Activated CD8-positive, alpha-beta T cell treated with anti-CD3 and anti-CD28 coated beads for 36 hours (primary cell): ENCODE measurements at regions of chr15 and their contacts with region 1.

Region 1: GRCh38 chr15:73972984-73973682 is 19.0 kb downstream of the STOML1 start:
- DNase-seq: peak; percentile 91
- ATAC-seq: peak; percentile 85
- H3K4me3 Mint-ChIP-seq: no peak overlapping the region
- H3K27ac Mint-ChIP-seq: no peak overlapping the region
- H3K4me1 Mint-ChIP-seq: peaks cover 23% of the 10 kb centered on the region
- H3K27me3 Mint-ChIP-seq: peaks cover 15% of the 10 kb centered on the region
- CTCF ChIP-seq: peak; percentile 72

Region 2: DNA sequence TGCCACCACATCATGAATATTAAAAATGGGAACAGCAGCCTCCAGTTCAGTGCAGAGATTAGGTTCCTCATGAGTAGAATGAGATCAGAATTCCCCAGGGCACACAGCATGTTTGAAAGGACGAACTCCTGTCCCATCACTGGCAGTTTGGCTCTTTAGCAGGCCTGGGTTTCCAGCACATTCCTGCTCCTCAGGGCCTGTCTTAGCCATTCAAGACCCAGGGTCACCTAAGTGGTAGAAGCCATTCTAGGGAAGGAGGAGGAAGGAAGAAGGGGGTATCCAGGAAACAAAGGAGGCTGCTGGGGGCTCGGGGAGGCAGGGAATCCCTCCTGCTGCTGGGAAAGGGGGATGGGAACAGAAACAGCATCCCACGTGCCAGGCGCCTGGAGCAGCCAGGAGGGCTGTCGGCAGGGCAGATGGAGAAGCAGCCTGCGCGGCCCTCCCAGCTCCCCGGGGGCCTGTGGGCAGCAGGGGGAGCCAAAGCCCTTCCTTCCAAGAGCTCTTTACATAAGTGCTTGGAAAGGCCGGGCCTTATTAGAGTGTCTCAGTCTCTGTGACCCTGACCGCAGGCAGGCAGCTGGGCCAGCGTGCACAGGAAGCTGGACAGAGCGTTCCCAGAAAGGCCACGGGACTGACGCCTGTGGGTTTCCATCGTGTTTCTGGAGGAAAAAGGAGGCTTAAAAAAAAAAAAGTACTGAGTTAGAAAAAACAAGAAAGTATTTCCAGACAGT is 22.1 kb before region 1 on chr15:
- CTCF ChIA-PET with region 1: interaction called, 12 read pairs
- POLR2A ChIA-PET with region 1: no interaction called
- intact Hi-C with region 1: no loop called
- DNase-seq: peak; percentile 88
- ATAC-seq: peak; percentile 98
- H3K4me3 Mint-ChIP-seq: no peak overlapping the region
- H3K27ac Mint-ChIP-seq: peak overlapping the region; percentile 80
- H3K4me1 Mint-ChIP-seq: peaks cover 4% of the 10 kb centered on the region
- H3K27me3 Mint-ChIP-seq: no peaks in the 10 kb centered on the region
- CTCF ChIP-seq: peak; percentile 73

Region 3: DNA sequence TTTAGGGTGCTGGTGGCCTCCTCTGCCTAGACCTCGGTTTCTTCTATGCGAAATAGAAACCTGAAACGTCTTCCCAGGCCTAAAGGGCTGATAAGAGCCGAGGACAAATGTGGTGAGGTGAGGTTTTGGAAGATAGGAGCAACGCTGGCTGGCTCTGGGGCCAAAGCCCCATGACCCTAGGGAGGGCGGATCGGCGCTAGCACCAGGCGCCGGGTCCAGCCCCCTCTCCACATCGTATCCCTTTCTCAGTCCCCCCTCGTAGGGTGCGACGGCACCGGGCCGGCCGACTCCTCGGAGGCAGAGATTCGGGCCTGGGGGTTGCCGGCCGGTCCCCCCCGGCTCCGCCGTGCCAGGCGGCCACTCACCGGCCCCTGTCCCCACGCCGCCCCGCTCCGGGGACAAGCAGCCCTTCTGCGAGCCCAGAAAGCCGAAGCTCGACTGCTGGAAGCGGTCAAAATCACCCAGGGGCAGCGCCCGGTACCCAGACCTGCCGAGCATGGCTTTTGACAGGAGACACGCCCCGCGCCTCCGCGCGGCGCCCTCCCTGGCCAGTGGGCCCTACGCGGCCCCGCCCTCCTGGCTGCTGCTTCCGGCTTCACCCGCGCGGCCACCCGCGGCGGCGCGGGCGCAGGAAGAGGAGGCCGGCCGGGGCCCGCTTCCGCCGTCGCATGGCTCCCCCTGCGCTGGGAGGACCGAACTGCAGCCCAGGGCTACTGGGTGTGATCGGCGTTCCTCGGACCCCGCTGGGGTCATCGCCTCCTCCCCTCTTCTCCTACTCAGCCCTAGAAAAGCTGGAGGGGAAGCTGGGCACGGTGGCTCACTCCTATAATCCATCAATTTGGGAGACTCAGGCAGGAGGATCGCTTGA is 18.8 kb after region 1 on chr15 and contains the start of gene STOML1:
- CTCF ChIA-PET with region 1: interaction called, 106 read pairs
- POLR2A ChIA-PET with region 1: interaction called, 7 read pairs
- intact Hi-C with region 1: no loop called
- DNase-seq: peak; percentile 94
- ATAC-seq: peak; percentile 77
- H3K4me3 Mint-ChIP-seq: peak within 1 kb of the TSS; percentile 78
- H3K27ac Mint-ChIP-seq: peak within 1 kb of the TSS; percentile 83
- H3K4me1 Mint-ChIP-seq: peaks cover 33% of the 10 kb centered on the region
- H3K27me3 Mint-ChIP-seq: no peaks in the 10 kb centered on the region
- CTCF ChIP-seq: peak; percentile 95
- total RNA-seq, gene STOML1: 5.2 to 6.5 TPM

Region 4: DNA sequence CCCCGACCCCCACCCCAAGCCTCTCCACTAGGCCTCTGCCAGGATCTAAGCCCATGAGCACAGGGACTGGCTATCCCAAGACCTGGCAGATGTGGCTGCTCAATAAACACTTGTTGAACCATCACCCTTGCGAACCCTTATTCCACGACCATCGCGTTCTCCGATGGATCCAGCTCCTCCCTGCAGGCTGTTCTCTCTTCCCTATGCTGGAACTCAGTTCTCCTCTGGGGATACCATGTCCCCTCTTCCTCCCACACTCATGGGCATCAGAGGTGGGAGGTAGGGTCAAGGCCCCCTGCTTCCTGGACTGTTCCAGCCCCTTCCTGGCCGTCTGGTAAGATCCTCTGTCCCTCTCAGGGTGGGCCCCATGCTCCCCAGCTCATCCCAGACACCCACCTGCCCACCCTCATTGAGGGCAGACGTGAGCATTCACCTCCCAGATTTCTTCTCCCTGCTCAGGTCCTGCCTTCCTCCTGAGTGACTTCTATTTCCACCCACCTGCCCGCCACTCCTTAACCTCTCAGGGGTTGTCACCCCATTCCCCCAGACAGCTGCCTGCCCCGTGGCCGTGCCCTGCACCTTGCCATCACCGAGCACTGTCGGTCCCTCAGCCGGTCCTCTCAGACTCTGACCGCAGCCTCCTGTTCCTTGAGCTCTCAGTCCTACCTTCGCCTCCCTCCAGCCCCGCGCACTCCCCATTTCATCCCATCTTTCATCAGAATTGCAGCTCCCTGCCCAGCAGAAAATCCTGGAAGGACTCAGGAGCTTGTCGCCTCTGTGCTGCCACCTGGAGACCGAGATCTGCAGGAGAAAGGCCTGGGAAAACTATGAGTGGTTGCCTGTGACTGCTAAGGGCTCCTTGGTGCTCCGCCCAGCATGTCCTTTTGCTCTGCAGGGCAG is 63.4 kb after region 1 on chr15:
- CTCF ChIA-PET with region 1: interaction called, 34 read pairs
- POLR2A ChIA-PET with region 1: no interaction called
- intact Hi-C with region 1: no loop called
- DNase-seq: no peak
- ATAC-seq: no peak
- H3K4me3 Mint-ChIP-seq: no peak overlapping the region
- H3K27ac Mint-ChIP-seq: no peak overlapping the region
- H3K4me1 Mint-ChIP-seq: no peaks in the 10 kb centered on the region
- H3K27me3 Mint-ChIP-seq: no peaks in the 10 kb centered on the region
- CTCF ChIP-seq: no peak

Region 5: DNA sequence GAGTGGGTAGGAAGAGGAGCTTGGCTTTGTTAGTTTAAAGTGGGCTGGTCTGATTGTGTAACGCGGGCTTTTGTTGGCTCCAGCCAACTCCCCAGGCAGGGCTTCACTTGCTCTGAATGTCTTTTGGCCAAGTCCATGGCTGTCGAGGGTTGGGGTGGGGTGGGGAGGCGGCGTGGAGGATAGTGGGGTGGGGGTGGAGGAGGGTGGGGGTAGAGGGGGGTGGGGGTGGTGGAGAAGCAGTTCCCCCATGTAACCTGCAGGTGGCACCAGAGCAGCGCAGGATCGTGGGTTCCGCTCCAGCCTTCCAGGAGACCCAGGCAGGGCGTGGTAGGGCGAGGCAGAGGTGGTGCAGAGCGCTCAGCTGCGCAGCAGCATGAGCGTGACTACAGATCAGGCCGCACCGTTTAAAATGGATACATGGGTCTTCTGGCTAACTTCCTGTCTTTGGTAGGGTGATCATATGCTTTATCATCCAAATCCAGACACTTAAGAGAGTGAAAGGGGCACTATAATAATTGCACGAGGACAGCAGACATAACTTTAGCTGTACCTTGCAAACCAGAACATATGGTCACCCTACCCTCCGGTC is 80.9 kb after region 1 on chr15:
- CTCF ChIA-PET with region 1: interaction called, 72 read pairs
- POLR2A ChIA-PET with region 1: no interaction called
- intact Hi-C with region 1: loop called (anchors 5 kb)
- DNase-seq: peak; percentile 84
- ATAC-seq: peak; percentile 100
- H3K4me3 Mint-ChIP-seq: no peak overlapping the region
- H3K27ac Mint-ChIP-seq: no peak overlapping the region
- H3K4me1 Mint-ChIP-seq: peaks cover 13% of the 10 kb centered on the region
- H3K27me3 Mint-ChIP-seq: peaks cover 2% of the 10 kb centered on the region
- CTCF ChIP-seq: peak; percentile 36

Region 6: DNA sequence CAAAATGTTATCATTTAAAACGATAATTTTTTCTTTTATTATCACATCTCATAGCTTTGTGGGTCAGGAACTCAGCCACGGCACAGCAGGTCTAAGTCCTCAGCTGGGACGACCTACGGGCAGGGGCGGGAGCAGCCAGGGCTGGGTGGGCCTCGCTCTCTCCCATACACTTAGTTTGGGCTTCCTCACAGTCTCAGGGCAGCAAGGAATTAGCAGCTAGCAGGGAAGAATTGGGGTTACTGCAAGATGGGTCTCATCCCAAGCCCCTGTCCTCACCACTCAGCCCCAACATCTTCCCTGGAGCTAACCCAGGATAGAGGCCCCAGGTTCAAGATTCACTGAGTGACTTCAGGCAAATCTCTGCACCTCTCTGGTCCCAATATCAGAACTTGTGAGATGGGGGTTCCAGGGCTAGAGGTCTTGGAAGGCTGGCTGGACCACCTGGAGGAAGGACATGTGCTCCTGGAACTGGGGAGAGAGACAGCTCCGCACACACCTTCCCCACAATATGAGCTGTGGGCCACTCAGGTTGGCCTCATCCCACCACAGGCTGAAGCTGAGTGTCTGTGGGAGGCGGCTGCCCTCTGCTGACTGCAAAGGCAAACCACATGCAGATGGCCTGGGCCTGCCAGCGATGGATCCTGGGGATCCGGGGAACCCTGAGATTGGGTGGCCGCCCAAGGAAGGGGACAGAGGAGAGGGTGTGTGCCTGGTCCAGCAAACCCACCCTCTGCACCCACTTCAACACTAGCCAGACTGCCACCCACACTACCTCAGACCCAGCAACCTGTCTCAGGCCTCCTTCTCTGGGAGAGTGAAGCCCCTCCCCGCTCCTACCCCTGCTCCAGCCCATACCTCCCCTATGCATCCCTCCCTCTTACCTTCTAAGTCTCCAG is 349.3 kb after region 1 on chr15:
- CTCF ChIA-PET with region 1: interaction called, 34 read pairs
- POLR2A ChIA-PET with region 1: no interaction called
- intact Hi-C with region 1: loop called (anchors 10 kb)
- DNase-seq: peak; percentile 77
- ATAC-seq: peak; percentile 77
- H3K4me3 Mint-ChIP-seq: no peak overlapping the region
- H3K27ac Mint-ChIP-seq: no peak overlapping the region
- H3K4me1 Mint-ChIP-seq: peaks cover 27% of the 10 kb centered on the region
- H3K27me3 Mint-ChIP-seq: no peaks in the 10 kb centered on the region
- CTCF ChIP-seq: peak; percentile 77